GM12878 (cell line): ENCODE measurements at regions of chr17 and their contacts with region 1.

Region 1: GRCh38 chr17:17935321-17936271 is 36.6 kb downstream of the TOM1L2 start:
- DNase-seq: no peak
- ATAC-seq: no peak
- H3K4me3 ChIP-seq: no peak overlapping the region
- H3K27ac ChIP-seq: no peak overlapping the region
- H3K4me1 ChIP-seq: peaks cover 7% of the 10 kb centered on the region; the same call in 1 of the 2 replicates
- H3K27me3 ChIP-seq: no peaks in the 10 kb centered on the region
- CTCF ChIP-seq: no peak
- EP300 ChIP-seq: no peak
- POLR2A ChIP-seq: no peak
- RAD21 ChIP-seq: no peak

Region 2: DNA sequence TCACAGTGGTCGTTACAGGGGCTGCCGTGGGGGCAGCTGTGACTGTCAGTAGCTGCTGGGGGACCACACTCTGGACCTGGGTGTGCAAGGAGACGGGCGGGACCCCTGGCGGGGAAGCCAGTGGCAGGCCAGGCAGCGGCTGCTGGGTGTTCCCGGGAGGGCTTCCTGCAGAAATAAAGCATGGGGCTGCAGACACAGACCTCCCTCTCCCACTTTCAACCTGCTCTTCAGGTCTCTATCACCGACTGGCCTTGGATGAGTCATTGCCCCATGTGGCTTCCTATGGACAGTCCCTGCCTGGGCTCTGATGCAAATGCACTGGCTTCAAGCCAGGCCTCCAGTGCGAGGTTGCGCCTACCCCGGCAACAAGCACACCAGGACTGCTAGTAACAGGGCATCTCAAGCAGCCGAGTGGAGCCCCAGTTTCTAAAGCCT is 116.0 kb before region 1 on chr17:
- CTCF ChIA-PET with region 1: no interaction called
- POLR2A ChIA-PET with region 1: no interaction called
- RAD21 ChIA-PET with region 1: no interaction called
- SMC1A ChIA-PET with region 1: no interaction called
- in situ Hi-C with region 1: no loop called
- intact Hi-C with region 1: no loop called
- DNase-seq: peak; percentile 78
- ATAC-seq: peak; percentile 75
- H3K4me3 ChIP-seq: no peak overlapping the region
- H3K27ac ChIP-seq: no peak overlapping the region
- H3K4me1 ChIP-seq: peaks cover 40% of the 10 kb centered on the region
- H3K27me3 ChIP-seq: no peaks in the 10 kb centered on the region
- CTCF ChIP-seq: no peak
- EP300 ChIP-seq: peak in 1 of 2 experiments; percentile 30; a peak in 1 of 4 replicates
- POLR2A ChIP-seq: no peak
- RAD21 ChIP-seq: no peak

Region 3: GRCh38 chr17:17884391-17885357 is 50.9 kb before region 1 on chr17:
- CTCF ChIA-PET with region 1: no interaction called
- POLR2A ChIA-PET with region 1: no interaction called
- RAD21 ChIA-PET with region 1: no interaction called
- SMC1A ChIA-PET with region 1: no interaction called
- in situ Hi-C with region 1: no loop called
- intact Hi-C with region 1: loop called (anchors 5 kb)
- DNase-seq: no peak
- ATAC-seq: no peak
- H3K4me3 ChIP-seq: no peak overlapping the region
- H3K27ac ChIP-seq: no peak overlapping the region
- H3K4me1 ChIP-seq: peaks cover 3% of the 10 kb centered on the region
- H3K27me3 ChIP-seq: no peaks in the 10 kb centered on the region
- CTCF ChIP-seq: no peak
- EP300 ChIP-seq: no peak
- POLR2A ChIP-seq: no peak
- RAD21 ChIP-seq: no peak

Region 4: DNA sequence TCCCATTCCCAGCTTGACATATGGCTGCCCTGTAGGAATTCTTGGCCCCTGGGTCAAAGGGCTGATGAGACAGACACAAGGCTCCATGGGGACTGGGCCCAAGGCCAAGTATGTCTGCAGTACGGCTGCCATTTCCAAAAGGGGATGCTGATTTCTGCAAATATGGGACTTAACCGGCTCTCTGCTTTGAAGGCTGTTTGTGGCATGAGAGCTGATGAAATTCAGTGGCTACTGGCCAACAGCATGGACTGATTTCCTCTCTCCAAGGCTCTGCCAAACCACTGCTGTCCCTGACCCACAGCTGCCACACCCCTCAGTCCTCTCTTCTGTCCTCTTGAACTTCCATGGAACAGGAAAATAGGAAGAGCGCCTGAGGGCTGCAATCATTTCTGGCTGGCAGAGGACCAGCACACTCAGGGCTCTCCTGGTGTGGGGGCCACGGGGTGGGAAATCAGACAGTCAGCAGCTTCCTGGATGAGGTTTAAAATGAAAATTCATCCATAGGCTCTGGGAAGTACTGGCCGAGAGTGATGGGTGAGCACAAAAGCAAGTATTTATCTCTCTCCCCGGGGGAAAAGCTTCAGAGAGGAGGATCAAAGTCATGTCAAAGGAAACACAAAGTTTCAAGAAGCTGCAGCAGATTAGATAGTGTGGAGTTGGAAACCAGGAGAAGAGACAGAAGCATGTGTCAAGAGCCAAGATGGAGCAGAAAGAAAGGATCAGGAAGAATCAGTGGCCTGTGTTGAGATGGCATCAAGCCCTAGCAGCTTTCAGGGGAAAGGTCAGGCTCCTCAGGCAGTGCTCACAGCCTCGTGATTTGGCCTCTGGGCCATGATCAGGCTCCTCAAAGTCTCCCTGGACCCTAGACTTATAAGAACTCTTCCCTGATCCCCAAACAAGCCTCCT is 34.7 kb before region 1 on chr17:
- CTCF ChIA-PET with region 1: no interaction called
- POLR2A ChIA-PET with region 1: no interaction called
- RAD21 ChIA-PET with region 1: no interaction called
- SMC1A ChIA-PET with region 1: no interaction called
- in situ Hi-C with region 1: no loop called
- intact Hi-C with region 1: no loop called
- DNase-seq: no peak
- ATAC-seq: no peak
- H3K4me3 ChIP-seq: no peak overlapping the region
- H3K27ac ChIP-seq: no peak overlapping the region
- H3K4me1 ChIP-seq: peaks cover 25% of the 10 kb centered on the region
- H3K27me3 ChIP-seq: no peaks in the 10 kb centered on the region
- CTCF ChIP-seq: no peak
- EP300 ChIP-seq: no peak
- POLR2A ChIP-seq: no peak
- RAD21 ChIP-seq: no peak

Region 5: GRCh38 chr17:18129041-18129502 is 193.5 kb after region 1 on chr17:
- CTCF ChIA-PET with region 1: no interaction called
- POLR2A ChIA-PET with region 1: no interaction called
- RAD21 ChIA-PET with region 1: no interaction called
- SMC1A ChIA-PET with region 1: no interaction called
- in situ Hi-C with region 1: no loop called
- intact Hi-C with region 1: no loop called
- DNase-seq: no peak
- ATAC-seq: peak; percentile 65
- H3K4me3 ChIP-seq: no peak overlapping the region
- H3K27ac ChIP-seq: no peak overlapping the region
- H3K4me1 ChIP-seq: no peaks in the 10 kb centered on the region
- H3K27me3 ChIP-seq: no peaks in the 10 kb centered on the region; a peak in 1 of 4 replicates
- CTCF ChIP-seq: no peak
- EP300 ChIP-seq: no peak
- POLR2A ChIP-seq: no peak
- RAD21 ChIP-seq: no peak